ENCODE measurements at regions of chr3 and their contacts with region 1.

Region 1: GRCh38 chr3:4493014-4493940 is at the start of gene ITPR1:
- H3K4me3 Mint-ChIP-seq: peak within 1 kb of the TSS; percentile 87
- H3K27ac Mint-ChIP-seq: peak within 1 kb of the TSS; percentile 87
- H3K4me1 Mint-ChIP-seq: peaks cover 46% of the 10 kb centered on the region
- H3K27me3 Mint-ChIP-seq: peaks cover 4% of the 10 kb centered on the region

Region 2: GRCh38 chr3:3881050-3881449 is 612.2 kb before region 1 on chr3:
- intact Hi-C with region 1: no loop called
- H3K4me3 Mint-ChIP-seq: no peak overlapping the region
- H3K27ac Mint-ChIP-seq: no peak overlapping the region
- H3K4me1 Mint-ChIP-seq: no peaks in the 10 kb centered on the region
- H3K27me3 Mint-ChIP-seq: no peaks in the 10 kb centered on the region

Region 3: GRCh38 chr3:4218456-4219226 is 274.6 kb before region 1 on chr3:
- intact Hi-C with region 1: no loop called
- H3K4me3 Mint-ChIP-seq: no peak overlapping the region
- H3K27ac Mint-ChIP-seq: no peak overlapping the region
- H3K4me1 Mint-ChIP-seq: peaks cover 7% of the 10 kb centered on the region
- H3K27me3 Mint-ChIP-seq: no peaks in the 10 kb centered on the region

Region 4: DNA sequence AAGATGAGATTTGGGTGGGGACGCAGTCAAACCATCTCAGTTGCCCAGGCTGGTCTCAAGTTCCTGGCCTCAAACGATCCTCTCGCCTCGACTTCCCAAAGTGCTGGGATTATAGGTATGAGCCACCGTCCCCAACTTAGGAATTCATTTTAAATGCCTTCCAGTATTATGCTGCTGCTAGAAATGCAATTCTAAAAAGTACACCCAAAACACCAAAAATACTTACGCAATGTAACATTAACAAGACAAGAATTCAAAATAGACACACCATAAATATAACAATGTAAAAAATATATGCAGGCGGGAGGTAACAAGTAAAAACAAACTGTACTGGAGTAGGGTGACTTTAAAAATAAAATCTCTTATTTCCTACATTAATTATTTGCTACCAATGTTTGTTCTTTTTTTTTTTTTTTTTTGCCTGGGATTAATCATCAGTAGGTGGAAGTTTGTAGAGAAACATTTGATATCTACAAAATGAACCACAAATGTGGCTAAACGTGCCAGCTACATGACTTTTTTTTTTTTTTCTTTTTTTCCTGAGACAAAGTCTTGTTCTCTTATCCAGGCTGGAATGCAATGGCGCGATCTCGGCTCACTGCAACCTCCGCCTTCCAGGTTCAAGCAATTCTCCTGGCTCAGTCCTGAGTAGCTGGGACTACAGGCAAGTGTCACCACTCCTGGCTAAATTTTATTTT is 133.3 kb before region 1 on chr3:
- intact Hi-C with region 1: no loop called
- H3K4me3 Mint-ChIP-seq: no peak overlapping the region
- H3K27ac Mint-ChIP-seq: no peak overlapping the region
- H3K4me1 Mint-ChIP-seq: no peaks in the 10 kb centered on the region
- H3K27me3 Mint-ChIP-seq: no peaks in the 10 kb centered on the region

Region 5: DNA sequence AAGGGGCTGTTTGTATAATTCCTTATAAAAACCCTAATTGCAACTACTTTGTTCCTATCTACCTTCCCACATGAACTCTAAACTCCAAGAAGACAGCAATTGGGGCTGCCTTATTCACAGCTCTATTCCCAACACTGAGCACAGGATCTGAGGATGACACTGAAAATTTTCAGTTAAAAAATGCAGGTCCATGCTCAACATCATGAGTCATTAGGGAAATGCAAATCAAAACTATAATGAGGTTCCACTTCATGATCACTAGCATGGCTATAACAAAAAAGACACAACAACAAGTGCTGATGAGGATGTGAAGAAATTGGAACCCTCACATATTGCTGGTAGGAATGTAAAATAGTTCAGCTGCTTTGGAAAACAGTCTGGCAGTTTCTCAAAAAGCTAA is 39.1 kb before region 1 on chr3:
- intact Hi-C with region 1: loop called (anchors 5 kb)
- H3K4me3 Mint-ChIP-seq: no peak overlapping the region
- H3K27ac Mint-ChIP-seq: no peak overlapping the region
- H3K4me1 Mint-ChIP-seq: peaks cover 27% of the 10 kb centered on the region
- H3K27me3 Mint-ChIP-seq: no peaks in the 10 kb centered on the region

Region 6: GRCh38 chr3:4478261-4478660 is 15.0 kb before region 1 on chr3:
- intact Hi-C with region 1: loop called (anchors 2 kb)
- H3K4me3 Mint-ChIP-seq: no peak overlapping the region
- H3K27ac Mint-ChIP-seq: no peak overlapping the region
- H3K4me1 Mint-ChIP-seq: peaks cover 39% of the 10 kb centered on the region
- H3K27me3 Mint-ChIP-seq: no peaks in the 10 kb centered on the region

Measured in dendritic cell treated with granulocyte-macrophage colony-stimulating factor and Interleukin-4, amounts not matched to agents 40 ng/mL and 50 ng/mL, for 4 days (primary cell).